RWPE1 (cell line): ENCODE measurements at regions of chr2 and their contacts with region 1.

Region 1: GRCh38 chr2:26059542-26059941 is 25.7 kb downstream of the RAB10 start:
- DNase-seq: no peak
- H3K27ac ChIP-seq: no peak overlapping the region
- CTCF ChIP-seq: no peak

Region 2: DNA sequence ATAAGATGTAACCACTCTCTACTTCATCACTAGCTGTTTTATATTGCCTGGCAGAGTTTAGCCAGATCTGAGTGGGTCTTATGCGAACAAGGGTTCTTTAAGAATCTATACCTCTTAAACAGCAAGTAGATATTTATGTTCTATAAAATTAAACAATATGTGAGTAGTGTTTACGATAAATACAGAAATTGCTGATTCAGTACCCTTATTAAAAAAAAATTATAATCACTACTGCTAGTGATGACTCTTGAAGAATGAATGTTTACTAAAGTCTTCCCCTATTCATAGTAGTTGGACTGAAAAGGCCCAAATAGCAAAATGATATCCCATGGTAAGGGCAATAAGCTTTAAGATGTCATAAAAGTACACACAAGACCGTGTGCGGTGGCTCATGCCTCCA is 287.5 kb before region 1 on chr2:
- CTCF ChIA-PET with region 1: no interaction called
- POLR2A ChIA-PET with region 1: interaction called, 17 read pairs
- DNase-seq: no peak
- H3K27ac ChIP-seq: no peak overlapping the region
- CTCF ChIP-seq: no peak

Region 3: DNA sequence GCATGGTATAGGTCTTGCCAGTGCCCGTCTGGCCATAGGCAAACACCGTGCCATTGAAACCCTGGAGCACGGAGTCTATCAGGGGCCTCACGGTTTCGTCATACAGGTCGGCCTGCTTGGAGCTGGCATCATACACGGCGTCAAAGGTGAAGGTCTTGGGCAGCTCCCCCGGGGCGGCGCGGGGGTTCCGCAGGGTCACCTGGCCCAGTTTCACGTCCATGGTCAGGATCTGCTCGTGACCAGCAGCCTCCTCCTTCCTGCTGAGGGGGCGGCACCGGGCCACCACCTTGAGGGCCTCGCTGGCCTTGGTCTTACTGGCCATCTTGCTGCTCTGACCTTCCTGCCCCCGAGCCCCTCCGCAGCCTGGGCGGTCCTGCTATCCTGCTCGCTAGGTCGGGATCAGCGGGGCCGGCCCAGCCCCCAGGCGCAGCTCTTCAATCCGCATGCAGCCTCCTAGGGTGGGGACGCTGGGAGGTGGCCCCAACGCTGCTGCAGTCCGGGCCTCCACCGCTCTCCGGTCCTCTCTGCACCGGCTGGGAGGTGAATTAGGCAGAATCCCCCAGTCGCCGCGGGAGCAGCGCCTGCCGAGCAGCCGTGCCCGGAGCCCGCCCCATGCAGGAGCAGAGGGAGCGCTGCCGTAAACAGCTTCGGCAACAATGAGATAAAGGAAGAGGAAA is 77.8 kb before region 1 on chr2:
- CTCF ChIA-PET with region 1: no interaction called
- POLR2A ChIA-PET with region 1: no interaction called
- DNase-seq: no peak
- H3K27ac ChIP-seq: peak overlapping the region; percentile 74
- CTCF ChIP-seq: no peak